ENCODE measurements at regions of chr10 and their contacts with region 1.

Region 1: DNA sequence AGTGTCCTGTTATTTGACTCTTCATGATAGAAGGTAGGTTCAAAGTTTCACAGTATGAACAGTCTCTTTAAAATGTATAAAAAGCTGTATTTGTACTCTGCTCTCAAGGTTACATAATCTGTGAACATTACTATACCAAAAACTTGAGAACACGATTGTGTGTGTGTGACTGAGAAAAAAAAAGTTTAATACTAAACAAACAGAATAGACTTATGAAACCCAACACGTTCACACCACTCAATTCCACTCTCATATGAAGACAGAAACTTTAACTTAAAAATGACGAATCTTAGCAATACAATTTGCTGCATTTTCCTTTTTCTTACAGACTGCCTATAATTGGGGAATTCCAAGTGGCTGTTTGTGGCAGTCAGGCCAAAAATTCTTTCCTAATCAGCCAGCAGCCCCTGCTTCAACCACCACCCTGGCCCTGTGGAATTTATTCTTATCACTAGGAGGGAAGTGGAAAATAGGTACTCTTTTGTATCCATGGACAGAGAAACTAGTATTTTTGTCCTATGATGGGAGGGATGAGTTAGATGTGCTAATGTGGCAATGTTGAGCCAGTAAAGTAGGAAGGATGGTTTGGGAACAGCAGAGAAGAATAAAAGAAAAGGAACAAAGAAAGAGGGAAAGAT is 42.8 kb downstream of the MINDY3 start:
- DNase-seq: no peak
- H3K4me3 ChIP-seq: no peak overlapping the region
- H3K27ac ChIP-seq: no peak overlapping the region
- H3K4me1 ChIP-seq: no peaks in the 10 kb centered on the region
- H3K27me3 ChIP-seq: no peaks in the 10 kb centered on the region
- CTCF ChIP-seq: no peak

Region 2: DNA sequence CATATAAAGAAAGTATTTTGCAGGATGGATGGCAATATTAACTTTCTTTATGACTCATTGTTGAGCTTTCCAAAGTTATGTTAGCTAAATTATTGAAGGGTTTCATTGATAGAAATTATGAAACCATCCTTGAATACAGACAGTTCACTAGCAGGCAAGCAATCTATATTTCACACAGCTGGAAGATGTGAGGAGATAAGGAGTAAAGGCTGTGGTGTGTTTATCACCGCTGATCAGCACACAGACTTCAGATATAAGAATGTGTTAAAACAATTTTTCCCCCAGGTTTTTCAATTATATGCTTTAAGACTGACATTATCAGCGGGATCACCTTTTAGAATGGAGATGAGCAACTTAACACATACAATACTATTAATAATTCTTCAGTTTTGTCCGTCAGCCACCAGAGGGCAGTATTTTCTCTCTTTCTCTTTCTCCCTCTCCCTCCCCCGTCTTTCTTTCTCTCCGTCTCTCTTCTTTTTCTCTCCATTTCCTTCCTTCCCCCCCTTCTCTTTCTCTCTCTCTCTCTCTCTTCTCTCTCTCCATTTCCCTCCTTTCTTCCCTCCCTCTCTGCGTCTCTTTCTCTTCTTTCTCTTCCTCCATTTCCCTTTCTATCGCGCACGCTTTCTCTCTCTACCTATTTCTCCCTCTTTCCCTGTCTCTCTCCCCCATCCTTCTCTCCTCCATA is 383.5 kb before region 1 on chr10:
- intact Hi-C with region 1: loop called (anchors 5 kb)
- DNase-seq: peak; percentile 47
- H3K4me3 ChIP-seq: no peak overlapping the region
- H3K27ac ChIP-seq: no peak overlapping the region
- H3K4me1 ChIP-seq: no peaks in the 10 kb centered on the region
- H3K27me3 ChIP-seq: no peaks in the 10 kb centered on the region
- CTCF ChIP-seq: peak; percentile 68

Measured in colonic mucosa (tissue), 4 donors.